ENCODE measurements at regions of chr17 and their contacts with region 1.

Region 1: DNA sequence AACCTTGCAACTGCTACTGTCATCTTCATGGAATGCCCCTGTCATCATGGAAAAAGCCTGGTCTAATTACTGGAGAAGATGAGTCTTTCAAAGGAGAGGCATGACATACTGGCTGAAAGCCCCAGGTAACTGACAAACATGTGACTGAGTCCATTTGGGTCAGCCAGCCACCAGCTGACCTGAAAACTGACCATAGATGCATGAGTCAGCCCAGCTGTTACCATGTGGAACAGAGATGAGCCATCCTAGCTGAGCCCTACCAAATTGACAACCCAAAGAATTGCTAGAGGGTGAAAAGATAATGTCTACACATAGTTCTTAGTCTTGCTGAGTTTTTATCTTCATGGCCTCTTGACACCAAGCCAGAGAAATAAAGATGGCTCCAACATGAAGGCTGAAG is 311.8 kb downstream of the UTP18 start:
- DNase-seq: no peak
- CTCF ChIP-seq: no peak

Region 2: GRCh38 chr17:51601622-51602261 is 29.6 kb after region 1 on chr17:
- in situ Hi-C with region 1: no loop called
- DNase-seq: no peak
- CTCF ChIP-seq: no peak

Region 3: GRCh38 chr17:51630101-51630671 is 58.1 kb after region 1 on chr17:
- in situ Hi-C with region 1: loop called (anchors 10 kb)
- DNase-seq: no peak
- CTCF ChIP-seq: no peak

Region 4: GRCh38 chr17:51745979-51746378 is 173.9 kb after region 1 on chr17:
- in situ Hi-C with region 1: no loop called
- DNase-seq: no peak
- CTCF ChIP-seq: no peak